A549 (cell line): ENCODE measurements at regions of chr3 and their contacts with region 1.

Region 1: DNA sequence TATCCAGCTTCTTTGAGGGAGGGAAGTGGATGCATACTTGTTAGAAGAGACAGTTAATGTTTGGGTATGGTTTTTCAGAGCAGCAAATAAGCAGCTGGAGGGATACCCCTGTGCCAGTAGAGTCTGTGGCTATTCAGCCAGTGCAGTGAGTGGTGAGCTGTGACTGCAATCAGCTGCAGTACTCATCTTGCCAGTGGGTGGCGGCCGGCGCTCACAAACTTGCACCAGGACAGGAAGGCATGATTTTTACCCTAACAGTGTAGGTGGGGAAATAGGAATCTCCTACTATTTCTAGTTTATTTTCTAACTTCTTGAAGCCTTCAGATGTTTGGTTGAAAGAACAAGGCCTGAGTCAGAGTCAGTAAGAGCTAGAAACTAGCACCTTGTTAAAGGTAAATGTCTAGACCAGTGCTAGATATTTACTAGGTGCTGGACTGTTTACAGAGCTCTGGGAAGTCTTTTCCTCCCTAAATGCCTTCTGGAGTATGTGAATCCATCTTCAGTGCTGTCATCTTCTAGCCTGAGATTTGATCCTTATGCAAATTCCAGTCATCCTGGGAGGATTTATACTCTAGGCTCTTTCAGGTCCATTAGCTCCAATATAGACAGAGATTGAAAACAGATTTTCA is 23.6 kb downstream of the TIMP4 start:
- DNase-seq: peak; percentile 64 to 66
- ATAC-seq: peak; percentile 96
- H3K4me3 ChIP-seq: no peak overlapping the region
- H3K27ac ChIP-seq: peak overlapping the region; percentile 0 to 39; a peak in 3 of 6 replicates
- H3K4me1 ChIP-seq: no peaks in the 10 kb centered on the region
- CTCF ChIP-seq: peak; percentile 95
- EP300 ChIP-seq: no peak
- POLR2A ChIP-seq: no peak
- RAD21 ChIP-seq: peak; percentile 98

Region 2: GRCh38 chr3:11735638-11736037 is 399.5 kb before region 1 on chr3:
- CTCF ChIA-PET with region 1: no interaction called
- POLR2A ChIA-PET with region 1: no interaction called
- DNase-seq: no peak
- ATAC-seq: peak in 1 of 2 experiments; percentile 40; a peak in 1 of 6 replicates
- H3K4me3 ChIP-seq: no peak overlapping the region
- H3K27ac ChIP-seq: no peak overlapping the region
- H3K4me1 ChIP-seq: no peaks in the 10 kb centered on the region
- CTCF ChIP-seq: no peak
- EP300 ChIP-seq: no peak
- POLR2A ChIP-seq: no peak
- RAD21 ChIP-seq: no peak

Region 3: GRCh38 chr3:11995120-11995519 is 140.0 kb before region 1 on chr3:
- CTCF ChIA-PET with region 1: no interaction called
- POLR2A ChIA-PET with region 1: no interaction called
- DNase-seq: no peak
- ATAC-seq: no peak; a peak in 2 of 6 replicates
- H3K4me3 ChIP-seq: no peak overlapping the region
- H3K27ac ChIP-seq: no peak overlapping the region
- H3K4me1 ChIP-seq: no peaks in the 10 kb centered on the region
- CTCF ChIP-seq: no peak
- EP300 ChIP-seq: no peak
- POLR2A ChIP-seq: no peak
- RAD21 ChIP-seq: no peak

Region 4: GRCh38 chr3:12120374-12121140 is 14.6 kb before region 1 on chr3:
- CTCF ChIA-PET with region 1: interaction called, 30 read pairs
- POLR2A ChIA-PET with region 1: no interaction called
- DNase-seq: no peak
- ATAC-seq: no peak
- H3K4me3 ChIP-seq: no peak overlapping the region
- H3K27ac ChIP-seq: no peak overlapping the region
- H3K4me1 ChIP-seq: 0 out of 3 replicates have a peak, but pooled peaks cover 6% of the 10 kb centered on the region
- CTCF ChIP-seq: no peak
- EP300 ChIP-seq: no peak
- POLR2A ChIP-seq: no peak
- RAD21 ChIP-seq: no peak

Region 5: DNA sequence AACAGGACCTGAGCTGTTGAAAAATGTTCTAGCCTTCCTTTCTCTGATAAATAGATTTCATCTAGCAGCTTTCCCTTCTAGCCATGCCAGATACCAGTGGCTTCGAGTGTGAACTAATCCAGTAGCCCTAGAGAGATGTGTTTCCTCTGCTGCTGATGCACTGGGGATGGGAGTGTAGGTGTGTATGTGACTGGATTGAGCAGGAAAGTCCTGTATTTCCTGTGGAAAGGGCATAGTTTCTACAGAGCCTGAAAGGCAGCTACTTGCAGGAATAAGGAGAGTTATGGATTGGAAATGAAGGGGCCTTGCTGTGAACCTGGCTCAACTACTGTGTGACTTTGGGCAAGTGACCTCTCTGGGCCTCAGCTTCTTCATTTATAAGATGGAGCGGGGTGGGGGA is 15.0 kb after region 1 on chr3:
- CTCF ChIA-PET with region 1: interaction called, 76 read pairs
- POLR2A ChIA-PET with region 1: no interaction called
- DNase-seq: no peak
- ATAC-seq: no peak
- H3K4me3 ChIP-seq: no peak overlapping the region
- H3K27ac ChIP-seq: no peak overlapping the region
- H3K4me1 ChIP-seq: peaks cover 9% of the 10 kb centered on the region
- CTCF ChIP-seq: no peak
- EP300 ChIP-seq: no peak
- POLR2A ChIP-seq: no peak
- RAD21 ChIP-seq: no peak

Region 6: GRCh38 chr3:12158387-12159226 is 23.5 kb after region 1 on chr3 and contains the start of gene TIMP4:
- CTCF ChIA-PET with region 1: interaction called, 76 read pairs
- POLR2A ChIA-PET with region 1: interaction called, 4 read pairs
- DNase-seq: peak; percentile 54 to 80
- ATAC-seq: peak; percentile 84 to 86
- H3K4me3 ChIP-seq: peak within 1 kb of the TSS; percentile 42
- H3K27ac ChIP-seq: peak within 1 kb of the TSS; percentile 74 to 92
- H3K4me1 ChIP-seq: peaks cover 51% of the 10 kb centered on the region
- CTCF ChIP-seq: no peak
- EP300 ChIP-seq: no peak
- POLR2A ChIP-seq: peak; percentile 58
- RAD21 ChIP-seq: no peak; a peak in 1 of 5 replicates
- polyA plus RNA-seq, gene TIMP4: 16.0 and 21.2 TPM in 2 replicates

Region 7: GRCh38 chr3:12175844-12176453 is 40.8 kb after region 1 on chr3:
- CTCF ChIA-PET with region 1: interaction called, 976 read pairs
- POLR2A ChIA-PET with region 1: interaction called, 3 read pairs
- DNase-seq: peak; percentile 58 to 60
- ATAC-seq: peak; percentile 96 to 98
- H3K4me3 ChIP-seq: no peak overlapping the region
- H3K27ac ChIP-seq: peak overlapping the region; percentile 33 to 51; a peak in 3 of 6 replicates
- H3K4me1 ChIP-seq: peaks cover 16% of the 10 kb centered on the region
- CTCF ChIP-seq: peak; percentile 85
- EP300 ChIP-seq: no peak
- POLR2A ChIP-seq: no peak
- RAD21 ChIP-seq: peak; percentile 94

Region 8: GRCh38 chr3:12495749-12496452 is 360.8 kb after region 1 on chr3:
- CTCF ChIA-PET with region 1: interaction called, 13 read pairs
- POLR2A ChIA-PET with region 1: no interaction called
- DNase-seq: no peak
- ATAC-seq: peak in 1 of 2 experiments; percentile 61; a peak in 3 of 6 replicates
- H3K4me3 ChIP-seq: no peak overlapping the region
- H3K27ac ChIP-seq: no peak overlapping the region
- H3K4me1 ChIP-seq: no peaks in the 10 kb centered on the region
- CTCF ChIP-seq: 0 out of 3 replicates have a peak, but pooled peaks have one; percentile 17
- EP300 ChIP-seq: no peak
- POLR2A ChIP-seq: no peak
- RAD21 ChIP-seq: no peak